ENCODE measurements at regions of chr6 and their contacts with region 1.

Region 1: DNA sequence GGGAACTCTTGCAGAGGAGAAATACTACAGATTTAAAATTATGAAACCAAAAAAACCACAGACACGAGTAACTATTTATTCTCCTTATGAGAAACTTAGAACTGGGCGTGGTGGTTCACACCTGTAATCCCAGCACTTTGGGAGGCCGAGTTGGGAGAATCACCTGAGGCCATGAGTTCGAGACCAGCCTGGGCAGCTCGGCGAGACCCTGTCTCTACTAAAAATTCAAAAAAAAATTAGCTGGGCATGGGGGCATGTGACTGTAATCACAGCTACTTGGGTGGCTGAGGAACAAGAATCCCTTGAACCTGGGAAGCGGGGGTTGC is 36.8 kb downstream of the SSR1 start:
- DNase-seq: no peak
- ATAC-seq: no peak
- H3K4me3 ChIP-seq: no peak overlapping the region
- H3K27ac ChIP-seq: no peak overlapping the region
- H3K4me1 ChIP-seq: peaks cover 24% of the 10 kb centered on the region
- H3K27me3 ChIP-seq: no peaks in the 10 kb centered on the region
- CTCF ChIP-seq: no peak
- EP300 ChIP-seq: no peak
- POLR2A ChIP-seq: no peak
- RAD21 ChIP-seq: no peak

Region 2: GRCh38 chr6:6270948-6271535 is 1005.1 kb before region 1 on chr6:
- CTCF ChIA-PET with region 1: no interaction called
- POLR2A ChIA-PET with region 1: no interaction called
- RAD21 ChIA-PET with region 1: no interaction called
- SMC1A ChIA-PET with region 1: no interaction called
- in situ Hi-C with region 1: no loop called
- intact Hi-C with region 1: no loop called
- DNase-seq: no peak
- ATAC-seq: no peak
- H3K4me3 ChIP-seq: no peak overlapping the region
- H3K27ac ChIP-seq: no peak overlapping the region
- H3K4me1 ChIP-seq: no peaks in the 10 kb centered on the region
- H3K27me3 ChIP-seq: no peaks in the 10 kb centered on the region; a peak in 2 of 4 replicates
- CTCF ChIP-seq: no peak
- EP300 ChIP-seq: no peak
- POLR2A ChIP-seq: no peak
- RAD21 ChIP-seq: no peak

Region 3: GRCh38 chr6:7300926-7301325 is 24.8 kb after region 1 on chr6:
- CTCF ChIA-PET with region 1: interaction called, 37 read pairs
- POLR2A ChIA-PET with region 1: interaction called, 3 read pairs
- RAD21 ChIA-PET with region 1: interaction called, 14 read pairs
- SMC1A ChIA-PET with region 1: interaction called, 10 read pairs
- in situ Hi-C with region 1: no loop called
- intact Hi-C with region 1: no loop called
- DNase-seq: no peak
- ATAC-seq: no peak
- H3K4me3 ChIP-seq: no peak overlapping the region
- H3K27ac ChIP-seq: no peak overlapping the region
- H3K4me1 ChIP-seq: no peaks in the 10 kb centered on the region; the same call in 1 of the 2 replicates
- H3K27me3 ChIP-seq: no peaks in the 10 kb centered on the region
- CTCF ChIP-seq: no peak
- EP300 ChIP-seq: no peak
- POLR2A ChIP-seq: no peak
- RAD21 ChIP-seq: no peak

Region 4: DNA sequence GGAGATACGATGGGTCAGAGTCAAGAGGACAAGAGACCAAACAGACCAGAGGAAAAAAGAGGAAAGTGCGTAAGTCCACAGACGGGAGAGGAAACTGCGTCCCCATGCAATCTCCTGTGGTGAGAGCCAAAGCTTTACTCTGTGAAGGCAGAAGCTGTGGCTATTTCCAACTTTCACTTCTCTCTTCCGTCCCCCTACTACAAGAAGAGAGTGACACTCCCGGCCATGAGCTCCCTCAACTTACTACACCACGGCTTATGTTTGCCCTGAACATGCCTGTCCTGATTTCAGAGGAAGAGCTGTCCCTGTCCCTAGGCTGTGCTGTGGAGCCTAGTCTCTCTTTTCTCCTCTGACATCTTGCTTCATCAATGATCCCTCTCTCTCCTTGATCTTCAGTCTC is 48.4 kb after region 1 on chr6:
- CTCF ChIA-PET with region 1: interaction called, 11 read pairs
- POLR2A ChIA-PET with region 1: no interaction called
- RAD21 ChIA-PET with region 1: interaction called, 17 read pairs
- SMC1A ChIA-PET with region 1: interaction called, 7 read pairs
- in situ Hi-C with region 1: no loop called
- intact Hi-C with region 1: no loop called
- DNase-seq: no peak
- ATAC-seq: peak; percentile 92
- H3K4me3 ChIP-seq: no peak overlapping the region
- H3K27ac ChIP-seq: no peak overlapping the region
- H3K4me1 ChIP-seq: peaks cover 6% of the 10 kb centered on the region
- H3K27me3 ChIP-seq: no peaks in the 10 kb centered on the region
- CTCF ChIP-seq: no peak
- EP300 ChIP-seq: 0 out of 4 replicates have a peak, but pooled peaks of 1 of the 2 experiments have one; percentile 12
- POLR2A ChIP-seq: no peak
- RAD21 ChIP-seq: no peak

Region 5: GRCh38 chr6:7389451-7390225 is 113.5 kb after region 1 on chr6 and contains the starts of genes CAGE1 and RIOK1:
- CTCF ChIA-PET with region 1: interaction called, 67 read pairs
- POLR2A ChIA-PET with region 1: interaction called, 5 read pairs
- RAD21 ChIA-PET with region 1: interaction called, 15 read pairs
- SMC1A ChIA-PET with region 1: interaction called, 41 read pairs
- in situ Hi-C with region 1: no loop called
- intact Hi-C with region 1: loop called (anchors 2 kb)
- DNase-seq: peak; percentile 74
- ATAC-seq: peak; percentile 96
- H3K4me3 ChIP-seq: peak within 1 kb of the TSS; percentile 89
- H3K27ac ChIP-seq: peak within 1 kb of the TSS; percentile 89
- H3K4me1 ChIP-seq: no peaks in the 10 kb centered on the region; the same call in 1 of the 2 replicates
- H3K27me3 ChIP-seq: no peaks in the 10 kb centered on the region
- CTCF ChIP-seq: no peak
- EP300 ChIP-seq: peak in 1 of 2 experiments; percentile 30; a peak in 1 of 4 replicates
- POLR2A ChIP-seq: peak; percentile 97
- RAD21 ChIP-seq: no peak
- polyA plus RNA-seq, gene CAGE1: 0.05 TPM in 1 of 2 experiments, not detected in the other
- polyA plus RNA-seq, gene RIOK1: 31.0 to 40.2 TPM

Region 6: DNA sequence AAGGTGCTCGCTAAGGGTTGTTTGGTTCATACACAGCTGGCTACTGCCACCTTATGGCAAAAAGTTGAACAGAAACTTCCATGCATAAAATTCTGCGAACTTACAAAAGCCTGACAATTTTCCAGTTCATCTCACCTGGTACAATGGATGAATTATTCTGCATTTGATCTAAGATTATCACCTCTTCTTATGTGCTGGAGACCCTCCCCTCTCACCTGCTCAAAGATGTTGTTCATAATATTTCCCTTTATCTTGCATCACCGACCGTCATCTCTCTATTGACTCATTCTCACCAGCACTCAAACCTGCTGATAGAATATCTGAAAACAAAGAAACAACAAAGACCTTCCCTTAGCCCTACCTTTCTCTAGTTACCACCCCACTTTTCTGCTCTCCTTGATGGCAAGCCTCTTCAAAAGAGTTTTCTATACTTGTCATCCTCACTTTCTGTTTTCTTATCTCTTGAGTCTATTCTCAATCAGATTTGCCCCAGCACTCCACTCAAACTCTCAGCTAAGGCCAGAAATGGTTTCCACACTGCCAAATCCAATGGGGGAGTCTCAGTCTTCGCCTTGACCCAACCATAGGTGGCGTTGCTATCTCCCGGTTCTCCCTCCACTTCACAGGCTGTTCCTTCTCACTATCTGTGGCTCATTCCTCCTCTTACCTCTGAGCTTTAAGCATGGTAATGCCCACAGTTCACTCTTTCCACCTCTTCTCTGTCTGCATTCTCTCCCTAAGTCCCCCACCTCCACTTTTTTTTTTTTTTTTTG is 339.6 kb after region 1 on chr6:
- CTCF ChIA-PET with region 1: interaction called, 92 read pairs
- POLR2A ChIA-PET with region 1: interaction called, 4 read pairs
- RAD21 ChIA-PET with region 1: interaction called, 28 read pairs
- SMC1A ChIA-PET with region 1: interaction called, 84 read pairs
- in situ Hi-C with region 1: loop called (anchors 5 kb)
- intact Hi-C with region 1: loop called (anchors 1 kb)
- DNase-seq: no peak
- ATAC-seq: peak; percentile 57
- H3K4me3 ChIP-seq: no peak overlapping the region
- H3K27ac ChIP-seq: no peak overlapping the region
- H3K4me1 ChIP-seq: peaks cover 5% of the 10 kb centered on the region; the same call in 1 of the 2 replicates
- H3K27me3 ChIP-seq: no peaks in the 10 kb centered on the region
- CTCF ChIP-seq: peak; percentile 72 to 83 (median 75)
- EP300 ChIP-seq: no peak
- POLR2A ChIP-seq: no peak
- RAD21 ChIP-seq: peak; percentile 92

Region 7: DNA sequence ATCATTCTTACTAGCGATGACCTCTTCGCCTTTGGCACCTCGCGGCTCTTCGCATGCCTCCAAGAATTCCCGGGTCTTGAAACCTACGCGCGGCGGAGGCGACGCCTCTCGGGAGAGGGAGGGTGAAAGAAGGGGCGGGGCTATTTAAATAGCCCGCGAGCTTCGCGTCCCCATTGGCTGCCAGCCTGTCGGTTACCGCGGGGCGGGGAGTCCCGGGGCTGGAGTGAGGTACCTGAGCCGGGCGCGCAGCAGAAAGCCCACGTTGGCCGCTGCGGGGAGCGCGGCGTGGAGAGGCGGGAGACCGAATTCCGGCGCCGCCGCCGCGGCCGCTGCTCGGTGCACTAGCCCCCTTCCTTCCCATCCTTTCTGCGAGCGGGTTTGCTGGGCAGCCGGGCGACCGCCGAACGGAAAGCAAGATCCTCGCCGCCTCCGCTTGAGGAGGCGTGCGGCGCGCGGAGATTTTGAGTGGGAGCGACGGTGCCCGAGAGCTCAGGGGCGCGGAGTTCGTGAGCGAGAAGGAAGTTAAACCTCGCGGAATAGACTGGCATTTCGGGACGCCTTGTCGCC is 449.8 kb after region 1 on chr6 and contains the start of gene BMP6:
- CTCF ChIA-PET with region 1: no interaction called
- POLR2A ChIA-PET with region 1: no interaction called
- RAD21 ChIA-PET with region 1: no interaction called
- SMC1A ChIA-PET with region 1: no interaction called
- in situ Hi-C with region 1: no loop called
- intact Hi-C with region 1: no loop called
- DNase-seq: no peak
- ATAC-seq: peak; percentile 88
- H3K4me3 ChIP-seq: peak within 1 kb of the TSS; percentile 63
- H3K27ac ChIP-seq: no peak within 1 kb of the TSS
- H3K4me1 ChIP-seq: peaks cover 3% of the 10 kb centered on the region; the same call in 1 of the 2 replicates
- H3K27me3 ChIP-seq: peaks cover 12 to 26% of the 10 kb centered on the region in 2 experiments
- CTCF ChIP-seq: no peak
- EP300 ChIP-seq: no peak
- POLR2A ChIP-seq: no peak
- RAD21 ChIP-seq: no peak
- polyA plus RNA-seq, gene BMP6: 0.02 to 0.11 TPM